ENCODE measurements at regions of chr11 and their contacts with region 1.

Region 1: GRCh38 chr11:11538277-11538960 is 83.4 kb downstream of the GALNT18 start:
- DNase-seq: peak; percentile 80 to 89 (median 84)
- ATAC-seq: peak; percentile 79 to 82 (median 80)
- H3K4me3 ChIP-seq: no peak overlapping the region
- H3K27ac ChIP-seq: peak overlapping the region; percentile 69 to 91 (median 84)
- H3K4me1 ChIP-seq: peaks cover 29 to 90% (median 66%) of the 10 kb centered on the region in 12 donors
- H3K27me3 ChIP-seq: no peaks in the 10 kb centered on the region
- CTCF ChIP-seq: no peak
- POLR2A ChIP-seq: no peak

Region 2: DNA sequence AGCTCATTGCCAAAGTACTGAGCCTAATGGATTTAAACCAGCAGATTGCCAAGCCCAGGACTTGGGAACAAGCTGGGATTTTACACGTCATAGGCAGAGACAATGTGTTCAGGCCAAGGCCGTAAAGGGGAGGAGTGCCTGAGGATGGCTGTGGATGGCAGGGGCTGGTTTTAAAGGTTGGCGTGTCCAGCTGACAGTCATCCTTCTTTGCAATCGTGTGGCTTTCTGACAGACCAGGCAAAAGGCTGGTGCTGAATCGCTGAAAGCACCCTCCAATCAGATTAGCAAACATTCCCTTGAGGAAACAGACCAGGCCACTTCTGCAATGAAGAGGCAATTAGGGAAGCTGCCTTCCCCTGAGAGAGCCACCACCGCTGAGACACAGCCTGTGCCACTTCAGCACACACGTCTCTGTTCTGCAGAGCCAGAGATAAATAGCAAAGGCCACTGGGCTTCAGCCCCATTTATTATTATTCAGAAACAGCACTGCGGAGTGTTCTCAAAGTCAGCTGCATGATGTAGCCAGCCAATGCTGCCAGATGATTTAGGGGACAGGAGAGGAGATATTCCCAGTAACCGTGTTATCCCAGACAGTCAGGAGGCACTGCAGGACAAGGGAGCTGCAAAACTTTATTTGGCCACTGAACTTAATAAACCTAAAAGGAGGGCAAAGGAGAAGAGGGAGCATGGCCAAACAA is 131.2 kb before region 1 on chr11:
- intact Hi-C with region 1: loop called in 4 of 10 experiments (anchors 5 to 10 kb)
- DNase-seq: peak in 3 of 5 donors; percentile 46 to 66 (median 59)
- ATAC-seq: peak; percentile 66 to 79 (median 74)
- H3K4me3 ChIP-seq: no peak overlapping the region
- H3K27ac ChIP-seq: peak overlapping the region; percentile 2 to 88 (median 55)
- H3K4me1 ChIP-seq: peaks cover 0 to 82% (median 41%) of the 10 kb centered on the region in 12 donors
- H3K27me3 ChIP-seq: peaks cover 0 to 5% (median 0%) of the 10 kb centered on the region in 9 donors
- CTCF ChIP-seq: peak in 7 of 12 donors; percentile 13 to 56 (median 45)
- POLR2A ChIP-seq: no peak

Region 3: GRCh38 chr11:11463405-11463804 is 75.0 kb before region 1 on chr11:
- intact Hi-C with region 1: loop called in 1 of 10 experiments (anchors 5 kb)
- DNase-seq: peak in 1 of 5 donors; percentile 55
- ATAC-seq: no peak
- H3K4me3 ChIP-seq: no peak overlapping the region
- H3K27ac ChIP-seq: peak overlapping the region in 1 of 12 donors; percentile 52
- H3K4me1 ChIP-seq: peaks cover 0 to 53% (median 19%) of the 10 kb centered on the region in 12 donors
- H3K27me3 ChIP-seq: no peaks in the 10 kb centered on the region
- CTCF ChIP-seq: no peak
- POLR2A ChIP-seq: no peak

Region 4: DNA sequence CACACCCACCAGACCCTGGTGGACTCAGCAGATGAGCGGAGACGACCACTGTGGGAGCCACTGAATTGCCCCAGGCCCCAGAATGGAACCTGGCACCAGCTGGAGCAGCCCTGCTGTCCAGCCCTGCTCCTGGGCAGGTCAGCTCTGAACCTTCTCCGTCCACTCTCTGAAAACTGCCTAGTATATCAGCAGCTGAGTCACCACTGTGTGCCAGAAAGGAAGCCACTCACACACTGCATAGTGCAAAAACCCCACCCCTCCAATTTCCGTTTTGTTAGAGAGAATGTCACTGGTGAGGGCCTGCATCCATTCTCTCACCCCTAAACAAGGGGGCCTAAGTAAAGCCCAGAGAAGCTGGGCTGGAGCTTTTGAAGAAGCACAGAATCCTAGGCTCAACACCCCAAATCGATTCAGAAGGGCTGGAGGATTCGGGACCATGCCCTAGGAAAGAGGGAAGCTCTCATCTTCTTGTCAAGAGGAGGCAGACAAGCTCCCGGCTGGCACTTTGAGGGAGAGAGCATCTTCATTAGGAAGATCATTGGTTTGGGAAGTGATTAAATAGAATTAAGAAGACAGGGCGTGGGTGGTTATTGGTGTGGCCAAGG is 38.9 kb after region 1 on chr11:
- intact Hi-C with region 1: loop called in 6 of 10 experiments (anchors 5 kb)
- DNase-seq: peak in 2 of 5 donors; percentile 36 to 41
- ATAC-seq: peak in 3 of 4 donors; percentile 30 to 82 (median 60)
- H3K4me3 ChIP-seq: no peak overlapping the region
- H3K27ac ChIP-seq: peak overlapping the region in 9 of 12 donors; percentile 29 to 82 (median 61)
- H3K4me1 ChIP-seq: peaks cover 3 to 82% (median 45%) of the 10 kb centered on the region in 12 donors
- H3K27me3 ChIP-seq: no peaks in the 10 kb centered on the region
- CTCF ChIP-seq: no peak
- POLR2A ChIP-seq: no peak